Caco-2 (cell line): ENCODE measurements at regions of chr3 and their contacts with region 1.

Region 1: GRCh38 chr3:40546816-40547215 is 22.1 kb downstream of the ZNF621 start:
- DNase-seq: no peak
- H3K4me3 ChIP-seq: no peak overlapping the region
- H3K4me3 Mint-ChIP-seq: no peak overlapping the region
- H3K27ac Mint-ChIP-seq: no peak overlapping the region
- H3K4me1 ChIP-seq: no peaks in the 10 kb centered on the region
- H3K4me1 Mint-ChIP-seq: no peaks in the 10 kb centered on the region
- H3K27me3 ChIP-seq: no peaks in the 10 kb centered on the region
- H3K27me3 Mint-ChIP-seq: no peaks in the 10 kb centered on the region
- CTCF ChIP-seq: no peak

Region 2: DNA sequence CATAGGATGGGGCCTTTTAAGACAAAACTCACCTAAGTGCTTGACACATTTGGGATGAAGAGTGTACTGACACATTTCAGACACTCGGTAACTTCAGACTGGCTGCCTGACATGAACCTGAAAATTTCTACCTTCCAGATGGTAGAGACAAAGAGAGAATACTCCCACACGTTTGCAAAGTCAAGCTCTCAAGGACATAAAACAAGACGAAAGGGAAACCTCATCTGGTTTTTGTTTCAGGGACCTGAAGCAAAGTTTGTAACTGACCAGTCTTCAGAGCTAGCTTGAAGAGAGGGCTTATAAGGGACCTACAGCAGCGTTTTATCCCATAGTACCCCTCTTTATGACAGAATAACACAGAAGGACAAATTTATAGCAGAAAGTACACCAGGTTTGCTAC is 19.9 kb after region 1 on chr3:
- CTCF ChIA-PET with region 1: interaction called, 10 read pairs
- POLR2A ChIA-PET with region 1: no interaction called
- intact Hi-C with region 1: no loop called
- DNase-seq: no peak
- H3K4me3 ChIP-seq: no peak overlapping the region
- H3K4me3 Mint-ChIP-seq: no peak overlapping the region
- H3K27ac Mint-ChIP-seq: no peak overlapping the region
- H3K4me1 ChIP-seq: no peaks in the 10 kb centered on the region
- H3K4me1 Mint-ChIP-seq: no peaks in the 10 kb centered on the region
- H3K27me3 ChIP-seq: no peaks in the 10 kb centered on the region
- H3K27me3 Mint-ChIP-seq: no peaks in the 10 kb centered on the region
- CTCF ChIP-seq: no peak